Endothelial cell of umbilical vein (primary cell): ENCODE measurements at regions of chr20 and their contacts with region 1.

Region 1: DNA sequence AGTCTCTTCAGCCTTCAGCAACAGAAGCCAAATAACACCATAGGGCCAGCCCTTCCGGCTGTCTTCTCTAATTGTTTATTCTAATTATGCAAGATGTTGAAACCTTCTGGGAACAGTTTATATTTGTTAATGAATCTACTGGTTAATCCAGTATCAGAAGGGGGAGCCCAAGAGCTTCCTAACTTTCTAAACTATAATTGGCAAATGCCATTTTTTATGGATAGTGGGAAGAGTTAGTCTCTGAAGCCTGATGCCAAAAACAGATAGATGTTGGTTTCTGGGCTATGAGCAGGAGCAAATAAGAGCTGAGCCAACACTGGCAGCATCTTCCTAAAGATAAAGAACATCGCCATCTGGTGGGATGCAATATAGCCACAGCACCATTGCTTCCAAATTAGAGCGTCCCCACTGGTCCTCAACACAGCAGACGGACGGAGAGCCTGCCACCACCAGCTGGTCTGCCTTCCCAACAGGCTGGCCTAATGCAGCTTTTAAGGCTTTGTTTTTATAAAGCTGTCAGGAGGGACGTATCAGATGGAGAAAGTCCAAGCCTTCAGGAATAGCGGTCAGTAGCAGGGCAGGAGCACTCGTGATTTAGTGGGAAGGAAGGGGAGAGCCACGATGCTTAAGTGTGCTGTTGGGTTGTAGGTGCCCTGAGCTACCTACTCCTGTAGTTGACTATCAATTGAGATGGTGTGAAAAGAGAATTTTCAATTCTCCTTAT is 118.8 kb downstream of the RALGAPA2 start:
- DNase-seq: peak; percentile 35
- H3K4me3 ChIP-seq: no peak overlapping the region
- H3K27ac ChIP-seq: no peak overlapping the region
- H3K4me1 ChIP-seq: no peaks in the 10 kb centered on the region
- H3K27me3 ChIP-seq: no peaks in the 10 kb centered on the region
- CTCF ChIP-seq: peak; percentile 35 to 47
- POLR2A ChIP-seq: no peak

Region 2: DNA sequence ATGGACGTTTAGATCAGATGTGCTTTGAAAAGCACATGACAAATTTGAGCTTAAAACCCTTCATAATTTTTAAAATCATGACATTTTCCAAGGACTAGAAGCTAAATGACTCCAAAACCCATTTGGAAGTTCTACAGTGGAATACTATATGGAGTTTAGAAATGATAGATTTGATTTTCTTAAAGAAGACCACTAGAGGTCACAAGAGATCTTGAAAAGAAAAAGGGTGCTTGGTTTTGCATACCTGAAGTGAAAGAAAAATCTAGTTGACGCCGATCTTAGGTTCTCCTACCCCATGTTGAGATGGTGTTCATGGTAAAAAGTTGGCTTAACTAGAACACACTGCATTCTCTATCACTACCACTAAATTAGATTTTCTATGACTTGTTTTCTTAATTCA is 509.8 kb before region 1 on chr20:
- CTCF ChIA-PET with region 1: interaction called, 10 read pairs
- POLR2A ChIA-PET with region 1: no interaction called
- dilution Hi-C with region 1: no loop called
- intact Hi-C with region 1: loop called (anchors 2 kb)
- DNase-seq: peak; percentile 33
- H3K4me3 ChIP-seq: no peak overlapping the region
- H3K27ac ChIP-seq: no peak overlapping the region
- H3K4me1 ChIP-seq: no peaks in the 10 kb centered on the region
- H3K27me3 ChIP-seq: peaks cover 5 to 15% of the 10 kb centered on the region in 2 experiments
- CTCF ChIP-seq: peak in 1 of 2 donors; percentile 13
- POLR2A ChIP-seq: no peak

Region 3: GRCh38 chr20:20130399-20130798 is 463.2 kb before region 1 on chr20:
- CTCF ChIA-PET with region 1: interaction called, 10 read pairs
- POLR2A ChIA-PET with region 1: no interaction called
- dilution Hi-C with region 1: no loop called
- intact Hi-C with region 1: no loop called
- DNase-seq: peak; percentile 12
- H3K4me3 ChIP-seq: no peak overlapping the region
- H3K27ac ChIP-seq: no peak overlapping the region
- H3K4me1 ChIP-seq: peaks cover 6% of the 10 kb centered on the region
- H3K27me3 ChIP-seq: peaks cover 1 to 4% of the 10 kb centered on the region in 2 experiments
- CTCF ChIP-seq: peak in 1 of 2 donors; percentile 1
- POLR2A ChIP-seq: no peak

Region 4: DNA sequence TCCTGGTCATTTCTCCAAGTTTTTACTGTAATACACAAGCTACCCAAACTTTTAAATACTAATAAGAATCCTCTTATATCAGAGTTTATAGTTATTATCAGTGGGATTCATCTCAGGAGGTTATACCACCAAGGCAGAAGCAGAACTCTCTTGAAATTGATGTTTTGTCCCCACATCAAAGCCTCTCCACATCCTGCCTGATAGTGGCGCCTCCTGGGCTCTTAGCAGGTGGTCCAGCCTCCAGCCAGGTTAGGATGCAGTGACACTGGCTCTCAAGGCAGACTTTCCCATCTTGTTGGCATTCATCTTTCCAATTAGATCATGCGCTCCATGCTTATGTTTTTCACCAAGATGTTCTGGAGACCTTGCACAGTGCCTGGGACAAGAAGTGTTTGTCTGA is 307.5 kb before region 1 on chr20:
- CTCF ChIA-PET with region 1: no interaction called
- POLR2A ChIA-PET with region 1: no interaction called
- dilution Hi-C with region 1: no loop called
- intact Hi-C with region 1: no loop called
- DNase-seq: no peak
- H3K4me3 ChIP-seq: no peak overlapping the region
- H3K27ac ChIP-seq: no peak overlapping the region
- H3K4me1 ChIP-seq: no peaks in the 10 kb centered on the region
- H3K27me3 ChIP-seq: no peaks in the 10 kb centered on the region
- CTCF ChIP-seq: no peak
- POLR2A ChIP-seq: no peak

Region 5: DNA sequence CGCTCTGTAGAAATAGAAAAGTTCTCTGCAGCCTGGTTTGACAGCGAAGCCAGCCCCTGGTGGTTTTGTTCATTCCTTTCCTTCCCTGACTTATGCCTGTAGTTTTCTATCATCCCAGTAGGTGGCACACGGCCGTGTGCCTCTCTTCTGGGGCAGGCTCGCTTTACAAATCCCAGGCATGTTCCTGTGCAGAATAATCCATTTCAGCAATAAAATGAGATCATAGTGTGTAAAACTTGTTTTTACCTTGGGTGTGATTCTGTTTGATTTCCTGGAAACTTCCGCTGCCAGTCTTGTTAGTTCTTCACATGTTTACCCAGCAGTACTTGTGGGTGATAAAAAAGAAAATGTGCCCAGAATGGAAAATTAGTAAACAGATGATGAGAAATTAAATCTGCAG is 233.1 kb before region 1 on chr20:
- CTCF ChIA-PET with region 1: interaction called, 17 read pairs
- POLR2A ChIA-PET with region 1: no interaction called
- dilution Hi-C with region 1: no loop called
- intact Hi-C with region 1: loop called (anchors 1 kb)
- DNase-seq: peak; percentile 69
- H3K4me3 ChIP-seq: no peak overlapping the region
- H3K27ac ChIP-seq: no peak overlapping the region
- H3K4me1 ChIP-seq: no peaks in the 10 kb centered on the region
- H3K27me3 ChIP-seq: peaks cover 43 to 54% of the 10 kb centered on the region in 2 experiments
- CTCF ChIP-seq: peak; percentile 69 to 85
- POLR2A ChIP-seq: no peak

Region 6: DNA sequence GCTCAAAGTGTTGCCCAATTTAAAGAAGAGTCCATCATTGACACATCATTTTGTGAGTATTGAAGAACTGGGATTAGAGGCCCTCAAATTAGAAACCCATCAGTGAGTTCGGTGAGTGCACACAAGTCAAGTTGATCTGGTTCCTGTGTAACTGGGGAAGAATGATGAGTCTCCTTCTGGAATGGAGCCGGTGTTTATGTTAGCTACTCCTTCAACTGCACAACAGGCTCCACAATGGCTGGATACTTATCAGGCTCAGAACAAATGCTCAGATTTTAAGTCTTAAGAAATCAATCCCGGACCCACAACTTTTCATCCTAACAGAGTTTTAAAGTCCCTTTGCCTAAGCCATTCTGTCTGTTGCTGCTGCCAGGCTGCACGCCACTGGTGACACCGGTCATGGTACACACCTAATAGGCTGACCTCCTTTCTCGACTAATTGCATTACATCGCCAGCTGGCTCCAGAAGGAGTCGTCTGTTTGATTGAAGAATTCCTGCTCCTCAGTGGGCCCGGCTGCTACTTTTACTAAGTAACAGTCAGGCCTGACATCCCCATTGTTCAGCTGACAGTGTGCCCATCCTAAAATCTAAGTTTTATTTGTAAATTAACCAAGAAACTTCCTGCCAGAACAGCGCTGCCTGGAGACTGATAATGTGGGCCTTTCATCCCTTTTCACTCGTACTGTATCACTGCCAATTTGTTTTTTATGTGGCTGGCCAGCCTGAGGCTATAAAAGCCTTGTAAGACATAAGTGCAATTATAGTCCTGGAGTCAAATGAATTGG is 95.3 kb before region 1 on chr20:
- CTCF ChIA-PET with region 1: no interaction called
- POLR2A ChIA-PET with region 1: no interaction called
- dilution Hi-C with region 1: no loop called
- intact Hi-C with region 1: no loop called
- DNase-seq: no peak
- H3K4me3 ChIP-seq: no peak overlapping the region
- H3K27ac ChIP-seq: no peak overlapping the region
- H3K4me1 ChIP-seq: no peaks in the 10 kb centered on the region
- H3K27me3 ChIP-seq: no peaks in the 10 kb centered on the region
- CTCF ChIP-seq: no peak
- POLR2A ChIP-seq: no peak

Region 7: GRCh38 chr20:20561841-20562240 is 31.8 kb before region 1 on chr20:
- CTCF ChIA-PET with region 1: interaction called, 12 read pairs
- POLR2A ChIA-PET with region 1: no interaction called
- dilution Hi-C with region 1: no loop called
- intact Hi-C with region 1: no loop called
- DNase-seq: no peak
- H3K4me3 ChIP-seq: no peak overlapping the region
- H3K27ac ChIP-seq: no peak overlapping the region
- H3K4me1 ChIP-seq: no peaks in the 10 kb centered on the region
- H3K27me3 ChIP-seq: no peaks in the 10 kb centered on the region
- CTCF ChIP-seq: no peak
- POLR2A ChIP-seq: no peak

Region 8: GRCh38 chr20:20580139-20580538 is 13.5 kb before region 1 on chr20:
- CTCF ChIA-PET with region 1: interaction called, 28 read pairs
- POLR2A ChIA-PET with region 1: no interaction called
- dilution Hi-C with region 1: no loop called
- intact Hi-C with region 1: no loop called
- DNase-seq: no peak
- H3K4me3 ChIP-seq: no peak overlapping the region
- H3K27ac ChIP-seq: no peak overlapping the region
- H3K4me1 ChIP-seq: no peaks in the 10 kb centered on the region
- H3K27me3 ChIP-seq: no peaks in the 10 kb centered on the region
- CTCF ChIP-seq: no peak
- POLR2A ChIP-seq: no peak

Region 9: DNA sequence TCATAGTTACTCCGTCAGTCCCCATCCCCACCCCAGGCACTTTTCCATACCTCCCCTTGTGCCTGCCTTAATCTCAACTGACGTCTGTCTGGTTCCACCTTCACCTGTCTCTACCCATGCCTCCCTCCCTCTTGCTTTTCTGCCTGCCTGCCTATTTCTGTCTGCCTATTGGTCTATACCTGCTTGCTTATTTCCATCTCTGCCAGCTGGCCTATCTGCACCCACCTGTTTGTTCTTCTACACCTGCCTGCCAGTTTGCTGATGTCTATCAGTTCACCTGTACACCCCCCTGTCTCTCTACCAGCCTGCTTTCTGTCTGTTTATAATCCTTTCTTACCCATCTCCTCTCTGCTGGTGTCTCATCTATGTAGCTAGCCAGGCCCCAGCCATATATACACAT is 31.3 kb after region 1 on chr20:
- CTCF ChIA-PET with region 1: interaction called, 10 read pairs
- POLR2A ChIA-PET with region 1: no interaction called
- dilution Hi-C with region 1: no loop called
- intact Hi-C with region 1: no loop called
- DNase-seq: no peak
- H3K4me3 ChIP-seq: no peak overlapping the region
- H3K27ac ChIP-seq: no peak overlapping the region
- H3K4me1 ChIP-seq: no peaks in the 10 kb centered on the region
- H3K27me3 ChIP-seq: no peaks in the 10 kb centered on the region
- CTCF ChIP-seq: no peak
- POLR2A ChIP-seq: no peak

Region 10: DNA sequence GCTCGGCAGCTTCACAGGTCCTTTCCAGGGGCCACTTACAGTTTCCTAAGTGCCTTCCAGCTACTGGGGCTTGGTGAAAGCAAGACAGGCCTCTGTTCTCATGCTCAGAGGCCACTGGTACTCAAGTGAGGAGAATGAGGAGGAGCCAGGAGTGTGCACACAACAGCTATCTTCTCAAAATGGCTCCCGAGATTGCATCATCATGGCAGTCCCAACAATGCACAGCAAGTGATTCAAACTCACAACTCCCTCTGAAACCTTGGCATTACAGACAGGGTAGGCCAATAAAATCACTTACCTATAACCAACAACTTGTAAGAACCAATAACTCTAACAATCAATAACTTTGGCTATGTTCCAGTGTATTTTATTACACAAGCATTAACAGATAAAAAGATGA is 41.4 kb after region 1 on chr20:
- CTCF ChIA-PET with region 1: no interaction called
- POLR2A ChIA-PET with region 1: no interaction called
- dilution Hi-C with region 1: no loop called
- intact Hi-C with region 1: no loop called
- DNase-seq: no peak
- H3K4me3 ChIP-seq: no peak overlapping the region
- H3K27ac ChIP-seq: no peak overlapping the region
- H3K4me1 ChIP-seq: no peaks in the 10 kb centered on the region
- H3K27me3 ChIP-seq: no peaks in the 10 kb centered on the region
- CTCF ChIP-seq: no peak
- POLR2A ChIP-seq: no peak

Region 11: GRCh38 chr20:20649945-20650344 is 56.3 kb after region 1 on chr20:
- CTCF ChIA-PET with region 1: no interaction called
- POLR2A ChIA-PET with region 1: no interaction called
- dilution Hi-C with region 1: no loop called
- intact Hi-C with region 1: no loop called
- DNase-seq: no peak
- H3K4me3 ChIP-seq: no peak overlapping the region
- H3K27ac ChIP-seq: no peak overlapping the region
- H3K4me1 ChIP-seq: no peaks in the 10 kb centered on the region
- H3K27me3 ChIP-seq: no peaks in the 10 kb centered on the region
- CTCF ChIP-seq: no peak
- POLR2A ChIP-seq: no peak